A673 (cell line): ENCODE measurements at regions of chr11 and their contacts with region 1.

Region 1: DNA sequence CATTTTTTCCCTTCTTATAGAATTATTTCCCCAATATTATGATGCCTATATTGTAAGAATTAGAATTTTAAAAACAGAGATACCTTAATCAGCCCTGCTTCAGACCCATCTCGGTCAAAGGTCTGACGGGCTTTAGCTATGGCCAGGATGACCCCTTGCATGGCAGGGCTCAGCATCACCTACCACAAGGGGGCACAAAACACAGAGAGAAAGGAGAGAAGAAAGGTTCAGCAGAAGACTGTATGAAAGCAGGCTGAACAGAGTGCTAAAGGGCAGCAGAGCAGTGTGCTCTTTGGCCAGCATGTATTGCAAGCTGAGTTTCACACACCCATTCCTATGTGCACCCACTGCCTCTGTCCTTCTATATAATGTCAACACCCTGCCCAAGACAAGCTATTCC is 26.8 kb downstream of the CLDN25 start:
- DNase-seq: peak; percentile 29
- H3K4me3 ChIP-seq: no peak overlapping the region
- H3K27ac ChIP-seq: no peak overlapping the region
- H3K4me1 ChIP-seq: no peaks in the 10 kb centered on the region
- H3K27me3 ChIP-seq: no peaks in the 10 kb centered on the region
- CTCF ChIP-seq: peak; percentile 71

Region 2: GRCh38 chr11:113577356-113578032 is 228.9 kb before region 1 on chr11:
- CTCF ChIA-PET with region 1: interaction called, 14 read pairs
- POLR2A ChIA-PET with region 1: no interaction called
- intact Hi-C with region 1: no loop called
- DNase-seq: no peak
- H3K4me3 ChIP-seq: no peak overlapping the region
- H3K27ac ChIP-seq: no peak overlapping the region
- H3K4me1 ChIP-seq: no peaks in the 10 kb centered on the region
- H3K27me3 ChIP-seq: no peaks in the 10 kb centered on the region
- CTCF ChIP-seq: no peak